A549 (cell line): ENCODE measurements at regions of chr7 and their contacts with region 1.

Region 1: GRCh38 chr7:134316539-134317344 is at the start of gene SLC35B4:
- DNase-seq: peak; percentile 99 to 100
- ATAC-seq: peak; percentile 98 to 100
- H3K4me3 ChIP-seq: peak within 1 kb of the TSS; percentile 74
- H3K27ac ChIP-seq: peak within 1 kb of the TSS; percentile 90 to 92
- H3K4me1 ChIP-seq: peaks cover 14% of the 10 kb centered on the region
- CTCF ChIP-seq: no peak
- EP300 ChIP-seq: no peak
- POLR2A ChIP-seq: peak; percentile 53
- RAD21 ChIP-seq: no peak
- polyA plus RNA-seq, gene SLC35B4: 73.0 and 83.9 TPM in 2 replicates

Region 2: DNA sequence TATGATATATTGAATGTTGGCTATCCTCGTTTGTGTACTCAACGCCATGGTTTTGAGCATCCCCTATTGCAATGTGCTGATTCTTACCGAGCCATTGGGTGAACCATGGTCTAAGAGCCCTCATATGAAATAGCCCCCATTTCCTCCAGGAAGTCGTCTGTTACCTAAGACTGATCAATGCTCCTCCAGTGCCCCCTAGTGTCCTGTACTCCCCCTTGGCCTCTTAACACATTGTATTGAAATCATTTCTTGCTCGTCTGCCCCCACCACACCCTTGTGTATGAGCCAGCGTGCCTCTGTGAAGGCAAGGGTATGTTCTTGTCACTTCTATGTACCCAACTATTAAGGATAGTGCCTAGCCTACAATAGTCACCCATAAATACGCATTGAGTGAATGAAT is 11.2 kb after region 1 on chr7:
- CTCF ChIA-PET with region 1: interaction called, 23 read pairs
- POLR2A ChIA-PET with region 1: interaction called, 4 read pairs
- DNase-seq: peak; percentile 71 to 87
- ATAC-seq: peak; percentile 52 to 96; a peak in 4 of 6 replicates
- H3K4me3 ChIP-seq: no peak overlapping the region
- H3K27ac ChIP-seq: no peak overlapping the region
- H3K4me1 ChIP-seq: no peaks in the 10 kb centered on the region
- CTCF ChIP-seq: peak; percentile 61
- EP300 ChIP-seq: no peak
- POLR2A ChIP-seq: no peak
- RAD21 ChIP-seq: peak; percentile 72 to 88

Region 3: DNA sequence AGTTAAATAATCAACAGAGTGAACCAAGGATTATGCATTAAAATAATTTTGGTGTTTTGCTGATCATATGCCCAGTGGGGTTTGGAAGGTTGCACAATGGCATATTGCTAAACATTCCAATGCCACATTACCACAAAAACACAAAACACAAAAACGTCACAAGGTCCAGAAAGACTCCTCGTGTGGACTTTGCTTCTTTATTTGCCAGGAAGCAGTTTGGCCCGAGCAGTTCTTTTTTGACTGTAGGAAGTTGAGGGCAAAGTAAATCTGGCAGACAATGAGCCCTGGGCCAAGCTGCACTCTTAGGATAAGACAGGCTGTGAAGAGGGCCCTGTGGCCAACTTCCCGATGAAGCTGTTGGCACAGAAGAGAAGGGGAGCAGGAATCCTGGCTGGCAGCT is 39.2 kb after region 1 on chr7:
- CTCF ChIA-PET with region 1: interaction called, 10 read pairs
- POLR2A ChIA-PET with region 1: interaction called, 5 read pairs
- DNase-seq: peak in 1 of 2 experiments; percentile 51
- ATAC-seq: peak in 1 of 2 experiments; percentile 24; a peak in 4 of 6 replicates
- H3K4me3 ChIP-seq: no peak overlapping the region
- H3K27ac ChIP-seq: peak overlapping the region; percentile 56 to 60; a peak in 5 of 6 replicates
- H3K4me1 ChIP-seq: peaks cover 23% of the 10 kb centered on the region
- CTCF ChIP-seq: no peak
- EP300 ChIP-seq: no peak; a peak in 1 of 5 replicates
- POLR2A ChIP-seq: no peak
- RAD21 ChIP-seq: no peak

Region 4: GRCh38 chr7:134368851-134369552 is 52.3 kb after region 1 on chr7:
- CTCF ChIA-PET with region 1: interaction called, 7 read pairs
- POLR2A ChIA-PET with region 1: interaction called, 16 read pairs
- DNase-seq: peak; percentile 81 to 97
- ATAC-seq: peak; percentile 45 to 81
- H3K4me3 ChIP-seq: no peak overlapping the region
- H3K27ac ChIP-seq: peak overlapping the region; percentile 89 to 90
- H3K4me1 ChIP-seq: peaks cover 61% of the 10 kb centered on the region
- CTCF ChIP-seq: no peak
- EP300 ChIP-seq: peak; percentile 96 to 97
- POLR2A ChIP-seq: no peak
- RAD21 ChIP-seq: peak in 1 of 2 experiments; percentile 69; a peak in 4 of 5 replicates